T-cell (primary cell): ENCODE measurements at regions of chr15 and their contacts with region 1.

Region 1: DNA sequence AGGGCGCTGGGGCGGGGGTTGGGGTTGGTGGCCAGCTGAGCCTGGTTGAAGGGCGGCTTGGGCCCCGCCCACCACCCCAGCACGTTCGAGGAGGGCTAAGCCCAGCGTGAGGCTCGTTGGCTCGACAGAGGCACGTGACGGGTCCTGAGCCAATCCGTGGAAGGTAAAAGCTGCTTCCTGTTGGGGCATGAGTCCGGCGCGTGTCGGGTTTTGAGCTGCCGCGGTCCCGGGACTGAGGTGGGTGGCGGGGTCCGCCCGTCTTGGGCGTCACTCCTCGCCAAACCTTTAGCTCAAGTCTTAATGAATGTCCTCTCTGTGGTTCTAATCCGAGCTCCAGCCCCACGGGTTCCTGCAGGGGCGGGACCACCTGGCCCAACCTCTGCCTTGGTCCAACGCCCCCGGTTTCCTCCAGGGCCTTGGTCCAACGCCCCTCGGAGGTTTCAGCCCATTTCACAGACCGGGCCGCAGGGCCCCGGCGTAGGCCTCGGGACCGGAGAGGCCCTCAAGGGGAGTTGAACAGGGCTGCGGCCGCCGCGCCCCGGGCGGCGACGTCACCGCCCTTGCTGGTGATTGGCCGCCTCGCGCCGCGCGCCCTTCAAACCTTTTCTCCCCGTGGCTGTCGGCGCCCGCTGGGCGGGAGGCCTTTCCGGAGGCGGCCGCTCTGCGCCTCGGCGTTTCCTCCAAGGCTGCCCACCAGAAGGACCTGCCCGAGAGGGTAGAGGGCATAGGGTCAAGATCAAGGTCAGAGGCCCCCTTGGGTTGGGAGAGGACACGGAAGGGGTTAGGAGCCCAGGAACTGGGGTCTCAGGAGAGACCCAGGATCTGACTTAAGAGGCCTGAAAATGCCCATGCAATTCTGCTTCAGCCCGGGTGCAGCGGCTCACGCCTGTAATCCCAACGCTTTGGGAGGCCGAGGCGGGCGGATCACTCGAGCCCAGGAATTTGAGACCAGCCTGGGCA is at the start of gene RCCD1:
- DNase-seq: peak; percentile 73 to 96 (median 82)
- ATAC-seq: peak; percentile 96 to 98 (median 97)
- H3K4me3 ChIP-seq: peak within 1 kb of the TSS; percentile 86 to 90
- H3K4me3 Mint-ChIP-seq: peak within 1 kb of the TSS; percentile 77 to 86 (median 85)
- H3K27ac ChIP-seq: peak within 1 kb of the TSS; percentile 93
- H3K27ac Mint-ChIP-seq: peak within 1 kb of the TSS; percentile 81 to 93
- H3K4me1 ChIP-seq: peaks cover 11 to 27% of the 10 kb centered on the region in 2 experiments
- H3K4me1 Mint-ChIP-seq: peaks cover 0 to 20% (median 16%) of the 10 kb centered on the region in 3 donors
- H3K27me3 ChIP-seq: no peaks in the 10 kb centered on the region
- H3K27me3 Mint-ChIP-seq: no peaks in the 10 kb centered on the region
- total RNA-seq, gene RCCD1: 5.7 to 21.2 (median 15.8) TPM

Region 2: DNA sequence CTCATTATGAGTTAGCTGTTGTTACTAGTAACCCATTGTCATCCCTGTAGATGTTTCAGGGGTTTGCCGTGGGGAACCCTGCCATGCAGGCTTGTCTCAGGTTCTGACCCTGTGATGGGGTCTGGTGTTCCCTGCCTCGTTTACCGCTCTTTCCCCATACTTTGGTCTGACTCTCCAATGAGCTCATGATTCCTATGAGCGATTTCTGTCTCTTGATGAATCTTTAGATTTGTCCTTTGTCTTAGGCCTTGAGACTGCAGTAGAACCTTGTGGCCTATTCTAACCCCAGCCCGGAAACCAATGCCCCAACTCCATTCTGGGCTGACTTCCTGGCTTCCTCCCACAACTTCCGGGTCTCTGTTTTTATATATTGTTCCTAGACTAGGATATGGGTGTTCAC is 578.2 kb before region 1 on chr15:
- CTCF ChIA-PET with region 1: interaction called in 1 of 2 experiments, 16 read pairs
- POLR2A ChIA-PET with region 1: no interaction called
- DNase-seq: peak; percentile 28 to 81 (median 60)
- ATAC-seq: peak; percentile 98 to 99 (median 99)
- H3K4me3 ChIP-seq: peak overlapping the region in 1 of 2 donors; percentile 25
- H3K4me3 Mint-ChIP-seq: peak overlapping the region; percentile 25 to 68 (median 26)
- H3K27ac ChIP-seq: peak overlapping the region; percentile 61
- H3K27ac Mint-ChIP-seq: peak overlapping the region; percentile 66 to 83
- H3K4me1 ChIP-seq: peaks cover 31 to 47% of the 10 kb centered on the region in 2 experiments
- H3K4me1 Mint-ChIP-seq: peaks cover 38 to 54% (median 46%) of the 10 kb centered on the region in 3 donors
- H3K27me3 ChIP-seq: no peaks in the 10 kb centered on the region
- H3K27me3 Mint-ChIP-seq: no peaks in the 10 kb centered on the region

Region 3: DNA sequence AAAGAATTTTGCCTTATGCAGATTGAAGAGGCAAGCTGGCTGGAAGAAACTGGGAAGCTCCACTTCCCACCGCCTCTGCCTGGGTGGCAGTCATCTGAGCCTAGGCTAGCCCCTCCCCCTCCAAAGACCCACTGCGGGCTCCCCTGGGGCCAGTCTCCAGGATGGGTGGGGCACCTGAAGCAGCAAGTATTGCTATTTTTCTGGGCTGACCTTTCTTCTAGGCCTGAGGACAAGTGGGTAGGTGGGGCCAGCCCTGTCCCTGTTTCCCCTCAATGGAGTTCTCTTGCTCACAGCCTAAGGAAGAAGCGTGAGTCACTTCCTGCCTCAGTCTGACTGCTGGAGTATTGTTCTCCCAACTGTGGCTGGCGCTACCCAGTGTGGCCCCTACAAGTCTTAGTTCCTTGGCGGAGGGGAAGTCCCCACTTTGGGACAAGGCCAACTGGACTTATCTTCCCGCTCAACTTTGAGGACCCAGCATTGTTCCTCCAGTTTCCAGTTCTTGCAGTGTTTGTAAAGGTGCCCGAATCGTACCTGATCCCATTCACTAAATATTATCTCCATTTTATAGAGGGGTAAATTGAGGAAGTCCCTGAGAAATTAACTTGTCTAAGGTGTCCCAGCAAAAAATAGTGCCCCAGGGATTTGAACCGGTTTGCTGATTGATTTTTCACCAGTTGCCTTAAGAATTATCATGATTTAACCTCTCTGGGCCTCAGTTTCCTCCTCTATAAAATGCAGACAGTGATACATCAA is 85.2 kb before region 1 on chr15:
- CTCF ChIA-PET with region 1: no interaction called
- POLR2A ChIA-PET with region 1: no interaction called
- DNase-seq: peak in 5 of 35 experiments; percentile 23 to 50 (median 42)
- ATAC-seq: peak in 3 of 4 experiments; percentile 24 to 52 (median 31)
- H3K4me3 ChIP-seq: no peak overlapping the region
- H3K4me3 Mint-ChIP-seq: peak overlapping the region; percentile 83 to 88 (median 86)
- H3K27ac ChIP-seq: peak overlapping the region; percentile 61
- H3K27ac Mint-ChIP-seq: peak overlapping the region; percentile 89 to 91
- H3K4me1 ChIP-seq: peaks cover 11 to 48% of the 10 kb centered on the region in 2 experiments
- H3K4me1 Mint-ChIP-seq: peaks cover 38 to 47% (median 45%) of the 10 kb centered on the region in 3 donors
- H3K27me3 ChIP-seq: no peaks in the 10 kb centered on the region
- H3K27me3 Mint-ChIP-seq: no peaks in the 10 kb centered on the region

Region 4: DNA sequence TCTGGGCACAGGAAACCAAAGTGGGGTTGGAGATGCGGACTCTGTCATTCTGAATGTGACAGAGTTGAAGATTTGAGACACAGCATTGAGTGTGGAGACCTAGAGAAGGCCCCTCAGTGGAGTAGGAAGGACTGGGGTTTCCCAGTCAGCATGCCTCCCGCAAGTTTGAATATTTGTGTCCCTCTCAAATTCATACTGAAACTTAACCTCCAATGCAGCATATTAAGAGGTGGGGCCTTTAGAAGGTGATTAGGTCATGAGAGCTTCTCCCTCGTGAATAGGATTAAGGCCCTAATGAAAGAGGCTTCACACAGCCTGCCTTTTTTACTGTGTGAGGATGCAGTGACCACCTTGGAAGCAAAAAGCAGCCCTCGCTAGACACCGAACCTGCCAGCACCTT is 30.6 kb before region 1 on chr15:
- CTCF ChIA-PET with region 1: no interaction called
- POLR2A ChIA-PET with region 1: no interaction called
- DNase-seq: no peak
- ATAC-seq: no peak
- H3K4me3 ChIP-seq: no peak overlapping the region
- H3K4me3 Mint-ChIP-seq: no peak overlapping the region
- H3K27ac ChIP-seq: no peak overlapping the region
- H3K27ac Mint-ChIP-seq: peak overlapping the region; percentile 2 to 15
- H3K4me1 ChIP-seq: peaks cover 3% of the 10 kb centered on the region in 2 experiments
- H3K4me1 Mint-ChIP-seq: peaks cover 3 to 6% (median 3%) of the 10 kb centered on the region in 3 donors
- H3K27me3 ChIP-seq: no peaks in the 10 kb centered on the region
- H3K27me3 Mint-ChIP-seq: no peaks in the 10 kb centered on the region

Region 5: DNA sequence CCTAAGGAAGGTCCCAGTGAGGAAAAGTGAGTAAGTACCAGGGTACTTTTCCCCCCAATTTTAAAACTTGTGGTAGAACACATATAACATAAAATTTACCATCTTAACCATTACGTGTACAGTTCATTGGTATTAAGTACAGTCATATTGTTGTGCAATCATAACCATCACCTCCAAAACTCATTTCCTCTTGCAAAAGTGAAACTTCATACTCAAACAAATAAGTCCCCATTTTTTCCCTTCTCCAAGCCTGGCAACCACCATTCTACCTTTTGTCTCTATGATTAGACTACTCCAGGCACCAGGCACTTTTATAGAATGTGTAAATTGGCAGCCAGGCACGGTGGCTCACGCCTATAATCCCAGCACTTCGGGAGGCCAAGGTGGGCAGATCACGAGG is 27.1 kb after region 1 on chr15:
- CTCF ChIA-PET with region 1: interaction called, 3 to 10 read pairs
- POLR2A ChIA-PET with region 1: no interaction called
- DNase-seq: no peak
- ATAC-seq: no peak
- H3K4me3 ChIP-seq: no peak overlapping the region
- H3K4me3 Mint-ChIP-seq: no peak overlapping the region
- H3K27ac ChIP-seq: no peak overlapping the region
- H3K27ac Mint-ChIP-seq: no peak overlapping the region
- H3K4me1 ChIP-seq: no peaks in the 10 kb centered on the region
- H3K4me1 Mint-ChIP-seq: peaks cover 0 to 11% (median 0%) of the 10 kb centered on the region in 3 donors
- H3K27me3 ChIP-seq: no peaks in the 10 kb centered on the region
- H3K27me3 Mint-ChIP-seq: no peaks in the 10 kb centered on the region

Region 6: DNA sequence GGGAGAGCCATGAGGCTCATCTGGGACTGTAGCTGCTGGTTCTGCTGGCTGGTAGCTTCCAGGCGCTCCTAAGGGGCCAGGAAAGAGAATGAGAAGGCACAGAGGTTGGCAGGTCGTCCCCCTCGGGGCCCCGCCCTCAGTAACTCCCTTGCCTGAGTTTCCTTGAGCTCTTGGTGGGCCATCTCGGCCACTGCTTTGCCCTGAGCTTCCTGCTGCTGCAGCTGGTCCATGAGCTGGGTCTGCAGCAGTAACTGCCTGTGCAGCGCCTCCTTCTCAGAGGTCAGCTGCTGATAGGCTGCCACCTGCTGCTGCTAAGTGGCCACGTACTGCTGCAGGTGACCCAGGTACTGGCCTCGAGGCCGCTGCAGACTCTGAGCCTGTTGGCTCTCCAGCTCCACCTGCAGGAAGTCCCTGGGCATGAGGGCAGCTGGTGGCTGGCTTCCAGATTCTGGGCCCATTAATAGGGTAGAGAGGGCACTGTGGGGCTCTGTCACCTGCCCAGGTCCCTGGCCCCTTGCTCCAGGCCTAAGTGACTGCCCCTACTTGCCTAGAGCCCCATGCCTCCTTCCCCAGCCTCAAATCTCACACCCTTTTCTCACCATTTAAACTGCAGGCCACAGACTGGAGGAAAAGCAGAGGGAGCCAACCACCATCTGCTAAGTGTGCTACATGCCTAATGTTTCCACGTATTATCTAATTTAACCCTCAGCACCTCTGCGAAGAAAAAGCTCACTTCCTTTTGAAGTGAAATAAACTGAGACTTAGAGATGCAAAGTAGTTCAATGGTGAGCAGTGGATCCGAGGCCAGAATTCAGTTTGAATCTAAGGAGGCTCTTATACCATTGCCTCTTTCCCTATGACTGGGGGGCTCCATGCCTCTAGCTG is 78.2 kb after region 1 on chr15:
- CTCF ChIA-PET with region 1: interaction called, 10 to 11 read pairs
- POLR2A ChIA-PET with region 1: interaction called in 1 of 2 experiments, 3 read pairs
- DNase-seq: peak in 33 of 35 experiments; percentile 11 to 67 (median 39)
- ATAC-seq: peak; percentile 63 to 79 (median 65)
- H3K4me3 ChIP-seq: no peak overlapping the region
- H3K4me3 Mint-ChIP-seq: no peak overlapping the region
- H3K27ac ChIP-seq: no peak overlapping the region
- H3K27ac Mint-ChIP-seq: no peak overlapping the region
- H3K4me1 ChIP-seq: peaks cover 0 to 7% of the 10 kb centered on the region in 2 experiments
- H3K4me1 Mint-ChIP-seq: peaks cover 4 to 10% (median 5%) of the 10 kb centered on the region in 3 donors
- H3K27me3 ChIP-seq: peaks cover 0 to 7% of the 10 kb centered on the region in 2 experiments
- H3K27me3 Mint-ChIP-seq: peaks cover 0 to 4% of the 10 kb centered on the region in 2 donors

Region 7: DNA sequence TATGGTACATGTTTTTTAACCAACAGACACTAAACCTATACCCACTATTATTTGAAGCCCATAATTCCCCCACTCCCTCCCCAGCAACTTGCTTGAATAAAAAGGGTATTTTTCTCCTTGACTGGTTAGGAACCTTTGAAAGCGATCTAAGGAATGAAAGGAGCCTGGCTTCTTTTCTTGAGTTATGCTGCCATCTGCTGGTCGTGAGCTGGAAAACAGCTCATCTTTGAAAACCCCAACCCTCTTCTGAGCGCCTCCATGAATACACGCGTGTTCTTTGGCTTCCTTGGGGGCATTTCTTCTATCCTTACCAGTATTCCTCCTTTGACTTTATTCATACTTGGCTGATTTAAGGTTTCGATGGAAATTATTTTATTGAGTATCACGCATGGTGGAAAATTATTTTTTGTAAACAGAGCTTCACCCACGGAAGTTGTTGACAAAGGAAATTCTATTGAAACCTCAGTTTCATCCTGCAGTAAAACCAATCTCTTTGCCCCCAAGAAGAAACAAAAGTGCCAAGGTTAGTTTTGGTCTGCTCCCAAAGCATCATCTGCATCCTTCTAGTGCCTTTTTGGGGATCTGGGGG is 316.7 kb after region 1 on chr15:
- CTCF ChIA-PET with region 1: interaction called, 3 to 17 read pairs
- POLR2A ChIA-PET with region 1: no interaction called
- DNase-seq: peak in 33 of 35 experiments; percentile 8 to 83 (median 44)
- ATAC-seq: peak; percentile 48 to 72 (median 68)
- H3K4me3 ChIP-seq: no peak overlapping the region
- H3K4me3 Mint-ChIP-seq: peak overlapping the region in 1 of 3 donors; percentile 36
- H3K27ac ChIP-seq: no peak overlapping the region
- H3K27ac Mint-ChIP-seq: peak overlapping the region; percentile 48 to 53
- H3K4me1 ChIP-seq: no peaks in the 10 kb centered on the region
- H3K4me1 Mint-ChIP-seq: peaks cover 0 to 9% (median 6%) of the 10 kb centered on the region in 3 donors
- H3K27me3 ChIP-seq: peaks cover 0 to 12% of the 10 kb centered on the region in 2 experiments
- H3K27me3 Mint-ChIP-seq: peaks cover 10 to 14% of the 10 kb centered on the region in 2 donors